Common myeloid progenitor, CD34-positive (primary cell): ENCODE measurements at regions of chr11 and their contacts with region 1.

Region 1: GRCh38 chr11:72413914-72414628 is 20.3 kb downstream of the CLPB start:
- DNase-seq: peak; percentile 83 to 90 (median 86)
- H3K4me3 ChIP-seq: no peak overlapping the region
- H3K27ac ChIP-seq: no peak overlapping the region
- H3K4me1 ChIP-seq: peaks cover 10 to 37% (median 24%) of the 10 kb centered on the region in 4 experiments
- H3K27me3 ChIP-seq: no peaks in the 10 kb centered on the region

Region 2: DNA sequence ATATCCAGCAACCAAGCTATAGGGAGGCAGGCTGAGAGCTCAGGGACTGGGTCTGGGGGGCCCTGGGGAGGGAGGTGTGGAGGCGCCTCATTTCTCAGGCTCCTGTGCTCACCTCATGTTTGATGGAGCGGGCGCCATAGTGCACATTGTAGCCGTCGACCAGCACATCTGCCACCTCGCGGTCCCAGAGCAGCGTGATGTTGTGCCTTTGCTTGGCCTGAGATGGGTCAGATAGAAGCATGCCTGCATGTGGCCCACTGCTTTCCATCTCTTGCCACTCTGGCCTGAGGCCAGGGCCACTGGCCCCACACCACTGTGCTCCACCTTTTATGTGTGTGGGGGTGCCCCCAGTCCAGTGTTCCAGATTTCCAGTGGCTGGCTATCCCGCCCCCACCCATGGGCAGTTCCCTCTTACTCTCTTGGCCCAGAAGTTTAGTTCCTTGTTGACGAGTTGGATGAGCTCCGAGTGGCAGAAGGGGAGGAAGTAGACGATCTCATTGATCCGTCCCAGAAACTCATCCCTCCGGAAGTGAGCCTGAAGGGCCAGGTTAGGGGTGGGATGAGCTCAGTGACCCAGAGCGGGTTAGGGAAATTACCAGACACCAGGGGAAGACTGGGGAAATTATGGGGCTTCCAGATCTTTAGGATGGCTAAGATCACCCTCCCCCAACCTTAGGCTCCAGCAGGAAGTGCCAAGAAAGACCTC is 120.0 kb before region 1 on chr11:
- CTCF ChIA-PET with region 1: interaction called, 13 read pairs
- POLR2A ChIA-PET with region 1: no interaction called
- DNase-seq: no peak
- H3K4me3 ChIP-seq: no peak overlapping the region
- H3K27ac ChIP-seq: no peak overlapping the region
- H3K4me1 ChIP-seq: no peaks in the 10 kb centered on the region
- H3K27me3 ChIP-seq: no peaks in the 10 kb centered on the region

Region 3: DNA sequence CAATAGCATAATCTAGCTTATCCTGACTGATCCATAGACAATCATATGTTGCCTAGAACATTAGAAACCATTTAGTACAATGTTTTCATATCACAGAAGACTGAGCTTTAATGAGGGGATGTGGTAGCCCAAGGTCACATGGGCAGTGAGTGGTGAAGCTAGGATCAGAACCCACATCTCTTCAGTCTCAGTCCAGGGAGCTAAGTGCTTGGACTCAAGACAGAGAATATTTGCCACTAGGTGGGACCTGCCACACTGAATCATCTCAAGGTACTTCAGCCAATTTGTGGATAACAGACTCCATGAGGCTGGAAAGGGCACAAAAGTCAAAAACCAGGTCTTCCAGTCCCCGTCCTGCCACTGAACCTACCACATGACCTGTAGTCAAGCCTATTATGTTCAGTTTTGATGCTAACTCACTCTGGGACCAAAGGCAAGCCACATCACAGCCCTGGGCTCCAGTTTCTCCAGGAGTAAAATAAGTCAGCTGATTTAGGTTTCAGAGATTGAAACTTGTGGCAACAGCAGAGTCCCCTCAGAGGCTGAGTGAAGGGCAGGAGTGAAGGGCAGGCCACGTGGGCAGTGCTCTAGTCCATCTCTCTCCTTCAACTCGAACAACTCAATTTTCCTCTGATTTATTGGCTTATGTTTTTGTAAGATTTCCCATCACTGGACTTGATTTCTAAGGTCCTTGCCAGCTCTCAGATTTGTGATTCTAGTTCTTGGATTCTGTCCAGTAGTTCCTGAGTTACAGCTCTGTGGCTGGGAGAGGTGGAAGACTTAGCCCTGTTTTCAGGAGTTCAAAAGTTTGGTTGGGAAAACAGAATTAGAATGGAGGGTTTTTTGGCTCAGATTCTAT is 85.5 kb before region 1 on chr11:
- CTCF ChIA-PET with region 1: interaction called, 27 read pairs
- POLR2A ChIA-PET with region 1: no interaction called
- DNase-seq: no peak
- H3K4me3 ChIP-seq: no peak overlapping the region
- H3K27ac ChIP-seq: no peak overlapping the region
- H3K4me1 ChIP-seq: peaks cover 0 to 28% (median 9%) of the 10 kb centered on the region in 4 experiments
- H3K27me3 ChIP-seq: no peaks in the 10 kb centered on the region

Region 4: GRCh38 chr11:72333661-72334060 is 80.4 kb before region 1 on chr11:
- CTCF ChIA-PET with region 1: interaction called, 27 read pairs
- POLR2A ChIA-PET with region 1: no interaction called
- DNase-seq: peak; percentile 71 to 81 (median 80)
- H3K4me3 ChIP-seq: peak overlapping the region in 1 of 7 experiments; percentile 14
- H3K27ac ChIP-seq: no peak overlapping the region
- H3K4me1 ChIP-seq: peaks cover 0 to 40% (median 19%) of the 10 kb centered on the region in 4 experiments
- H3K27me3 ChIP-seq: no peaks in the 10 kb centered on the region

Region 5: DNA sequence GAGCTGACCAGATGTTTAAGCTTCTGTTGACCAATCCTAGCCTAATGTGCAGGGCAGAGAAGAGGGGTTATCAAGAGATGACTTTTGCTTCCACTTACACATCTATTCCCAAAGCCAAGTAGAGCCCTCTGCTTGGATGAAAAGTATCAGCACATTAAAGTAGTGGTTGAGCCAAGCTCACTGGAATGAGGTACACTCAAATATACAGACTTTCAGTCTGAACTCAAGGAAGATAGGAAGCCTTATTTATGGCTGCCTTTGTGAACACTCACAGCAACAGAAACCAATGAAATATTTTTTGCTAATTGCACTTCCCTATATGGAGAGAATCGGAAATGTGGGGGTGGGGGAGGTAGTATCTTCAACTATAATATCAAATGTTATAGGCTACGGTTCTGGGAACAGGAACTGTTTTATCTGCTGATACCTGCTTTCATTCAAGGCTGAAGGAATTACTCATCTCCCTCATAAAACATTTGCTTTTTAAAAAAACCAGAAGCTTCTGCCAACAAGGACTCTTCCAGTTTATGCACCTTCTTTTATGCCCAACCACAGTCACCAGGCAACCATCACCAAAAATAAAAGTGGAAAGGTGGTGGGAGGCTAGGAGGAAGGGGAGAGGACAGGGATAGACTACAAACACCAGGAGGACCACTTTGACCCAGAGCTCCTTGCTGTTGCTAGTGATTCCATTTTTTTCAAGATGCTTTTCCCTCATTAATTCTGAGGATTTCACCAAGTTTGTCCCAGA is 70.9 kb before region 1 on chr11:
- CTCF ChIA-PET with region 1: interaction called, 30 read pairs
- POLR2A ChIA-PET with region 1: no interaction called
- DNase-seq: peak in 2 of 3 donors; percentile 55 to 68
- H3K4me3 ChIP-seq: no peak overlapping the region
- H3K27ac ChIP-seq: no peak overlapping the region
- H3K4me1 ChIP-seq: peaks cover 0 to 9% (median 1%) of the 10 kb centered on the region in 4 experiments
- H3K27me3 ChIP-seq: no peaks in the 10 kb centered on the region

Region 6: GRCh38 chr11:72352859-72353551 is 61.1 kb before region 1 on chr11:
- CTCF ChIA-PET with region 1: interaction called, 19 read pairs
- POLR2A ChIA-PET with region 1: no interaction called
- DNase-seq: no peak
- H3K4me3 ChIP-seq: no peak overlapping the region
- H3K27ac ChIP-seq: no peak overlapping the region
- H3K4me1 ChIP-seq: no peaks in the 10 kb centered on the region
- H3K27me3 ChIP-seq: no peaks in the 10 kb centered on the region

Region 7: GRCh38 chr11:72584293-72584938 is 170.3 kb after region 1 on chr11:
- CTCF ChIA-PET with region 1: no interaction called
- POLR2A ChIA-PET with region 1: no interaction called
- DNase-seq: peak; percentile 77 to 80 (median 79)
- H3K4me3 ChIP-seq: peak overlapping the region in 6 of 7 experiments; percentile 1 to 60 (median 36)
- H3K27ac ChIP-seq: no peak overlapping the region
- H3K4me1 ChIP-seq: peaks cover 0 to 14% (median 10%) of the 10 kb centered on the region in 4 experiments
- H3K27me3 ChIP-seq: peaks cover 0 to 32% (median 19%) of the 10 kb centered on the region in 5 experiments